Sciatic nerve (tissue), 2 donors: ENCODE measurements at regions of chr2 and their contacts with region 1.

Region 1: GRCh38 chr2:26355038-26355995 is 8.7 kb upstream of the ADGRF3 start:
- DNase-seq: no peak
- ATAC-seq: no peak

Region 2: DNA sequence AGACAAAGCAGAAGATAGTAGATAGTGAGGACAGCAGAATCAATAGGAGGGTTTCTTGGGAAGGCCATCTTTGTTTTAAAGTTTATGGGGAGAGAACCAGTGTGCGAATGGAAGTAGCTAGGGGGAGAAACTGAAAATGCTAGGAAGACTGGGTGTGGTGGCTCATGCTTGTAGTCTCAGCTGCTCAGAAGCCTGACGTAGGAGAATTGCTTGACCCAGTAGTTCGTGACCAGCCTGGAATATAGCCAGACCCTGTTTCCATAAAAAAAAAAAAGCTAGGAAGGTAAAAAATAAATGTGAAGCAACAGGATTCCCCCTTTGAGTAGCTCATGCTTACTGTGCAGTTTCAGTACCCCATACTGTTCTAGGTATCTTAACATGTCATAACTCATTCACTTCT is 27.2 kb after region 1 on chr2:
- intact Hi-C with region 1: no loop called
- DNase-seq: no peak
- ATAC-seq: peak; percentile 69

Region 3: GRCh38 chr2:26469092-26469710 is 113.9 kb after region 1 on chr2:
- intact Hi-C with region 1: loop called (anchors 10 kb)
- DNase-seq: no peak
- ATAC-seq: no peak